Caco-2 (cell line): ENCODE measurements at regions of chr2 and their contacts with region 1.

Region 1: DNA sequence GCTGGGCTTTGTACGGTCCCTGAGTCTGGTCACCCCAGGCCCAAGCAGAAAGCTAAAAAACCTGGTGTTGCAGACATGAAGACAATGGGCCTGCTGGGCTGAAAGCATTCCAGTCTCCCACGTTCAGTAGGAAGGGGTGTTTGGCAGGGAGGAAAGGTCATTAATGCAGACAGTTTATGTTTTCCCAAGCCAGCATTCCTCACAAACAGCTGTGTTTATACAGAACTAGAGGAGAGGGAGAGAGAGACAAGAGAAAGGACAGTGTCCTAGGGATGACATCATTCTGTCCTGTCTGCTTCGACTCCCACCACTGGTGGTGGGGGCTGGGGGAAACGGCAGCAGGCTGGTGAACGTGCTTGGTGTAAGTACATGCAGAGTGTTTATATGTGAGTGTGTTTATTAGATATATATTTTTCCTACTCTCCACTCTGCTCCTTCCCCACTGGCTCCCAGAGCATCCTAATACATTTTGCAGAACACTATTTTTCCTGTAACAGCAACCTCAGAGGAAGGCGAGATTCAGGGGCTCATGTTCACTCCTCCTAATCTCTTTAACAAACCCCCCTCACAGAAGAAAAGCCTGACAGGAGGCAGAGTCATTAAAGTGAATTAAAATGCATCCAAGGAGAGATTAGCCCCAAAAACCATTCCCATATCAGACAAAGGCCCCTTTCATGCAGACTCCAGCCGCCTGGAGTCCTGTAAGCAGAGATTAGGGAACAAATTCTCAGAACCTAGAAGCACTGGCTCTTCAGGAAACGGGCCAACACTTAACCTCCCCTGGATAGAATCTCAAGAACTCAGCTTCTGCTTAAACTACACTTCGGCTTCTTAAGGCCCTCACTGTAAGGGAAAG is 380.4 kb downstream of the TNS1 start:
- DNase-seq: peak; percentile 66 to 67
- H3K4me3 ChIP-seq: no peak overlapping the region
- H3K4me3 Mint-ChIP-seq: no peak overlapping the region
- H3K27ac Mint-ChIP-seq: peak overlapping the region; percentile 87
- H3K4me1 ChIP-seq: peaks cover 18% of the 10 kb centered on the region
- H3K4me1 Mint-ChIP-seq: peaks cover 16% of the 10 kb centered on the region
- H3K27me3 ChIP-seq: no peaks in the 10 kb centered on the region
- H3K27me3 Mint-ChIP-seq: no peaks in the 10 kb centered on the region
- CTCF ChIP-seq: no peak

Region 2: DNA sequence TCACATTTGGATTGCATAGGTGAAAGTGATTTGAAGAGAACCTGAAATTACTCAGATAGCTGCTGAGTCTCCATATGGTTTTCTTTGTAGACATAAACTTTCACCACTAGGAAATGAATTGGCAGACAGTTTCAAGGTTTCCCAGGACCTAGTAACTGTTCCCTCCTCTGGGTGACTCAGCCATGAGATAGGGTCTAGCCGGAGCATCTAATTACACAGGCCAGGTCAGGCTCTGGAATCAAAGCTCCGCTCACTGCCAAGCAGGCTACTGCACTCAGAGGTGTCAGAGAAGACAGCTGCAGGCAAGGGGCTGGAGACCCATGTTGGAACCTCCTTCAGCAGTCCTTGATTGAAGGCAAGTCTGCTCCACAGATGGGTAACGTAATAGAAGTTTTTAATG is 48.9 kb before region 1 on chr2:
- CTCF ChIA-PET with region 1: no interaction called
- POLR2A ChIA-PET with region 1: no interaction called
- intact Hi-C with region 1: no loop called
- DNase-seq: no peak
- H3K4me3 ChIP-seq: no peak overlapping the region
- H3K4me3 Mint-ChIP-seq: no peak overlapping the region
- H3K27ac Mint-ChIP-seq: no peak overlapping the region
- H3K4me1 ChIP-seq: peaks cover 13% of the 10 kb centered on the region
- H3K4me1 Mint-ChIP-seq: peaks cover 18% of the 10 kb centered on the region
- H3K27me3 ChIP-seq: no peaks in the 10 kb centered on the region
- H3K27me3 Mint-ChIP-seq: peaks cover 2% of the 10 kb centered on the region
- CTCF ChIP-seq: no peak

Region 3: GRCh38 chr2:217685255-217685605 is 62.8 kb after region 1 on chr2:
- CTCF ChIA-PET with region 1: no interaction called
- POLR2A ChIA-PET with region 1: no interaction called
- intact Hi-C with region 1: loop called (anchors 1 kb)
- DNase-seq: peak; percentile 91 to 93
- H3K4me3 ChIP-seq: no peak overlapping the region
- H3K4me3 Mint-ChIP-seq: peak overlapping the region; percentile 58
- H3K27ac Mint-ChIP-seq: peak overlapping the region; percentile 89
- H3K4me1 ChIP-seq: peaks cover 24% of the 10 kb centered on the region
- H3K4me1 Mint-ChIP-seq: peaks cover 22% of the 10 kb centered on the region
- H3K27me3 ChIP-seq: no peaks in the 10 kb centered on the region
- H3K27me3 Mint-ChIP-seq: no peaks in the 10 kb centered on the region
- CTCF ChIP-seq: no peak